ENCODE measurements at regions of chr2 and their contacts with region 1.

Region 1: GRCh38 chr2:17879101-17879912 is 840 bp downstream of the KCNS3 start:
- DNase-seq: peak; percentile 65 to 72
- ATAC-seq: peak; percentile 72 to 92 (median 78)
- H3K4me3 ChIP-seq: peak overlapping the region; percentile 62 to 85 (median 68)
- H3K27ac ChIP-seq: peak overlapping the region; percentile 18 to 66 (median 46)
- H3K4me1 ChIP-seq: peaks cover 4 to 23% (median 19%) of the 10 kb centered on the region in 9 donors
- H3K27me3 ChIP-seq: peaks cover 0 to 68% (median 35%) of the 10 kb centered on the region in 7 donors
- CTCF ChIP-seq: peak in 7 of 9 donors; percentile 13 to 48 (median 18)

Region 2: DNA sequence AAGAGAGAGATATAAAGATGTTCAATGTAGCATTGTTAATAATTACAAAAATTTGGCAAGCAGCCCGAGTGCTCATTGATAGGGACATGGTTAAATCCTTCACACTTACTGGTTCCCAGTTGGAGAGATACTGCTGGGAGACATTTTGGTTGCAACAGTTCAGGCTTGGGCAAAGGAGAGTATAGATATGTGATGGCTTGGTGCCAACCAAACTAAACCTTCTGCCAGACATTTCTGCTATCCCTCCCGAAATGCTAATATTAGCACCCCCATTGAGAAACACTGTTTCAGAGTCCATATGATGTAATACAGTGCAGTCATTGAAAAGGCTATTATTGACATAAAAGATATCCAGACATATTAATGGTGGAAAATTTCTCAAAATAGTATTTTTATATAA is 113.9 kb before region 1 on chr2:
- intact Hi-C with region 1: no loop called
- DNase-seq: no peak
- ATAC-seq: peak in 4 of 8 donors; percentile 31 to 65 (median 52)
- H3K4me3 ChIP-seq: no peak overlapping the region
- H3K27ac ChIP-seq: peak overlapping the region in 1 of 10 donors; percentile 15
- H3K4me1 ChIP-seq: peaks cover 0 to 10% (median 0%) of the 10 kb centered on the region in 9 donors
- H3K27me3 ChIP-seq: no peaks in the 10 kb centered on the region
- CTCF ChIP-seq: no peak

Region 3: GRCh38 chr2:17981936-17982335 is 102.6 kb after region 1 on chr2:
- intact Hi-C with region 1: no loop called
- DNase-seq: no peak
- ATAC-seq: no peak
- H3K4me3 ChIP-seq: no peak overlapping the region
- H3K27ac ChIP-seq: no peak overlapping the region
- H3K4me1 ChIP-seq: peaks cover 0 to 9% (median 0%) of the 10 kb centered on the region in 9 donors
- H3K27me3 ChIP-seq: no peaks in the 10 kb centered on the region
- CTCF ChIP-seq: no peak

Region 4: GRCh38 chr2:18077704-18078103 is 198.4 kb after region 1 on chr2:
- intact Hi-C with region 1: loop called in 1 of 10 experiments (anchors 10 kb)
- DNase-seq: no peak
- ATAC-seq: no peak
- H3K4me3 ChIP-seq: no peak overlapping the region
- H3K27ac ChIP-seq: no peak overlapping the region
- H3K4me1 ChIP-seq: peaks cover 0 to 5% (median 0%) of the 10 kb centered on the region in 9 donors
- H3K27me3 ChIP-seq: no peaks in the 10 kb centered on the region
- CTCF ChIP-seq: no peak

Measured in heart right ventricle (tissue), 16 donors.